Breast epithelium (tissue), 4 donors: ENCODE measurements at regions of chr7 and their contacts with region 1.

Region 1: GRCh38 chr7:70387217-70387616 is 744.7 kb upstream of the GALNT17 start:
- DNase-seq: no peak
- H3K4me3 ChIP-seq: no peak overlapping the region
- H3K27ac ChIP-seq: no peak overlapping the region
- H3K4me1 ChIP-seq: no peaks in the 10 kb centered on the region
- H3K27me3 ChIP-seq: no peaks in the 10 kb centered on the region
- CTCF ChIP-seq: no peak
- POLR2A ChIP-seq: no peak

Region 2: DNA sequence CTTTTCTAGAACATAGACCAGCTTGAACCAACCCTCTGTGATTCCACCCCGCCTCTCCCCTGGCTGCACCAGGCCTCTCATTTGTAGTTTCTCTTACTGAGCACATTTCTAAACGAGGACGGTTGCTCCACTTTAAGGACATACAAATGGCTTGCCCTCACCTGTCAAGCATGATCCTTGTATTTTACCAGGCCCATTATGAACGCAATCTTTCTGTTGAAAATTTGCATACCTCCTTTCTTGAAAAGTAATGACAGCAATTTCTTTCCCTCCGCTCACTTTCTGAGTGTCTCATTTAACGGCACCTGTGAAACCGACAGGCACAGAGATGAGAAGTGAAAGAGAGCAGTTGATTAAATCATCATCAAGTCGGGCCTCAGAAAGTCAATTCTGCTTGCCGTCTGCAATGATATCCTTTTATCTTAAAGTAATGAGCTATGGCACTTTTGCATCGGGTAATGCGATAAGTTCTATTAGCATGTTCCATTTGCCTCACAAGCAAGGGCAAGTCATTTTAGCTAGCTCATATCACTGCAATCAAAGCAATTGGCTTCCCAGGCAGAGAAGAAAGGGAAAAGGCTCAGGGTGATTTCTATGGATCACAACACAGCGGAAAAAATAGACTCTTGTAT is 39.1 kb after region 1 on chr7:
- intact Hi-C with region 1: loop called (anchors 1 kb)
- DNase-seq: no peak
- H3K4me3 ChIP-seq: no peak overlapping the region
- H3K27ac ChIP-seq: no peak overlapping the region
- H3K4me1 ChIP-seq: no peaks in the 10 kb centered on the region
- H3K27me3 ChIP-seq: no peaks in the 10 kb centered on the region
- CTCF ChIP-seq: no peak
- POLR2A ChIP-seq: no peak